HEK293 (cell line): ENCODE measurements at regions of chr19 and their contacts with region 1.

Region 1: GRCh38 chr19:58362272-58362994 is at the start of gene ZNF497:
- H3K4me3 ChIP-seq: peak within 1 kb of the TSS; percentile 96
- H3K27ac ChIP-seq: peak within 1 kb of the TSS; percentile 85
- H3K4me1 ChIP-seq: no peaks in the 10 kb centered on the region
- CTCF ChIP-seq: peak; percentile 78

Region 2: DNA sequence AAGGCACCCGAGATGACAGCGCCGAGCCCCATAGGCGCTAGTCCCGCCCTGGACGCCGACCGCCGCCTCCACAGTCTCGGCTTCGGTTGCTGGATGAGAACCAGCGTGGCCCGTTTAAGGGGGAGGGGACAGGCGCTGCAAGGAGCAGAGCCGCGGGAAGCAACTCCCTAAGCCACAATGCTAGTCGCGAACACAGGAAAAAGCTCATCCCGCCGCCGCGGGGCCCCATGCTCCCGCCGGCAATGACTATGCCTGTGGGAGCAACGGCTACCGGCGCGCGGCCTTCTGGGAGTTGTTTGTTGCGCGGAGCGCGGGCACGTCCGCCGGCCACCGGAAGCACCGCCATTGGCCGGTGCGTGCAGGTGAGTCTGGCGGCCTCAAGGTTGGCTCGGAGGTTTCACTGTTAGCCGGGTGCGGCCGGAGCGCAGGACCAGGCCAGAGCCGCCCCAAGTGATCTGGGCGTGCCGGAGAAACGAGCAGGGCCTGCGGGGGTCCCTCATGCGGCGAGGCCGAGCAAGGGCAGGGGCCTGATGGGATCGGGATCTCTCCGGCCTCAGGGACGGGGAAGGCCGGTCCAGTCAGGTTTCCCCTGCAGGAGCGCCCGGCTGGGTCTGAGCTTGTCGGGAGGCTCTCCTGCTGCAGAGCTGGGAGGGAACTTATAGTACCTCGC is 133.7 kb before region 1 on chr19 and contains the start of gene ZNF544:
- CTCF ChIA-PET with region 1: no interaction called
- POLR2A ChIA-PET with region 1: interaction called, 23 read pairs
- H3K4me3 ChIP-seq: peak within 1 kb of the TSS; percentile 93
- H3K27ac ChIP-seq: peak within 1 kb of the TSS; percentile 90
- H3K4me1 ChIP-seq: no peaks in the 10 kb centered on the region
- CTCF ChIP-seq: peak; percentile 21

Region 3: GRCh38 chr19:58261968-58262921 is 100.2 kb before region 1 on chr19:
- CTCF ChIA-PET with region 1: no interaction called
- POLR2A ChIA-PET with region 1: no interaction called
- H3K4me3 ChIP-seq: no peak overlapping the region
- H3K27ac ChIP-seq: no peak overlapping the region
- H3K4me1 ChIP-seq: no peaks in the 10 kb centered on the region
- CTCF ChIP-seq: no peak

Region 4: DNA sequence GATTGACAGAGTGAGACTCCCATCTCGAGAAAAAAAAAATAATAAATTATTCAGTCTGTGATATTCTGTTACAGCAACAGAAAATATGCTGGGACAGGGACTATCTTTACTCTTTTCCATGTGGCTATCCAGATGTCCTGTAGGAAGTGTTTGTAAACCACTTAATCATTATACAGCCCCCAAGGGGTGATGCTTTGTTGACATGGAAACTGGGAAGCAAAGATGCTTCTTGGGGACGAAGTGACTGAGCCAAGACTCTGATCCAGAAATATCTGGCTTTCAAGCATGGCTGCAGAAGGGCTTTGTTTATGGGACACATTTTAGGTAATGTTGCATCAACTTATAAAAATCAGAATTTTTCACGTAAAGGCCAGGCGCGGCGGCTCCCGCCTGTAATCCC is 78.2 kb before region 1 on chr19:
- CTCF ChIA-PET with region 1: no interaction called
- POLR2A ChIA-PET with region 1: no interaction called
- H3K4me3 ChIP-seq: no peak overlapping the region
- H3K27ac ChIP-seq: no peak overlapping the region
- H3K4me1 ChIP-seq: no peaks in the 10 kb centered on the region
- CTCF ChIP-seq: no peak

Region 5: DNA sequence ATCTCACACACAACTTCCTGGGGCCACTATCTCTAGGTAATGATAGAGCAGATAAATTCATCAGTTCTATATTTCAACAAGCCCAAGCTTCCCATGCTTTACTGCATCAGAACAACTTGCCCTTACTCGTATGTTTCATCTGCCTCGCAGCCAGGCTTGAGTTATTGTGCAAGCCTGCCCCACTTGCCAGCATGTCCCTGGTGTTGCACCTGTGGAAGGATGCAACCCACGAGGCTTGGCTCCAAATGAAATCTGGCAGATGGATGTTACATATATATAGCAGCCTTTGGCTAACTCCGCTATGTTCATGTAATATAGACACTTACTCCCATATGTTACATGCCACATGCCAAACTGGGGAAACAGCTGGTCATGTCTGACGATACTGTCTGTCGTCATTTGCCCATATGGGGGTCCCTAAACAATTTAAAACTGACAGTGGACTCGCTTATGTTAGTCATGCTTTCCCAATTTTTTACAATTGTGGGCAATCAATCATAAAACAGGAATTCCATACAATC is 51.0 kb before region 1 on chr19:
- CTCF ChIA-PET with region 1: no interaction called
- POLR2A ChIA-PET with region 1: no interaction called
- H3K4me3 ChIP-seq: no peak overlapping the region
- H3K27ac ChIP-seq: no peak overlapping the region
- H3K4me1 ChIP-seq: no peaks in the 10 kb centered on the region
- CTCF ChIP-seq: no peak

Region 6: DNA sequence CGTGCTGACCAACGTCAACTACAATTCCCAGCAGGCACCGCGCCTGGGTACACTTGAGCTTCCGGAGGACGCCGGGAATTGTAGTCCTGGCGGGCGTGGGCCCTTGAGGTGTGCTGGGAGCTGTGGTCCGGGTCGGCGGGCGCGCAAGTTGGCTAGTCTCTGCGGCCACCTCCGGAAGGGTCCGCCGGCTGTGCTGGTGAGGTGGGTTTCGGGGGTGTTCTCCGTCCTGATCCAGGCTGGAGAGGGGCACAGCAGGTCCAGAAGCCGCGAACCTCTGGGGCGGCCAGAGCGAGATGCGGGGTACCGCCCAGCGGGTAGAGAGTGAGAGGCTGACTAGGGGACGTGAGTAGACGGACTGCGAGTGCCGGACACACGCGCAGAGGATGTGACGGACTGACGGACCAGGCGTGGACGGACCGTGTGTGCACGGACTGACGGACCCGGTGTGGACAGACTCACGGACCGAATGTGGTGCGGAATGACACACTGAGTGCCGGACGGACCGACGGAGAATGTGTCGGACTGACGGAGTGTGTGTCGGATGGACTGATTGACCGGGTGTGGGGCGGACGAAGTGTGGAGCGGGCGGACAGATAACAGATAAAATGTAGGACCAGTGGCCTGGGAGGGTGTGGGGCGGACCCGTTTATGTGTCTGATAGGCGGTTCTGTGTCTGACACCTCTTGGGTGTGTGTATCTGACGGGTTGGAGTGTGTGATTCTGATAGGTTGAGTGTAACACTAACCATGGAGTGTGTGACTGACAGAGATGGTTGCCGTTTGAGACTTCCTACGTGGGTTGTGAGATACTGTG is 35.3 kb before region 1 on chr19 and contains the start of gene ZSCAN22:
- CTCF ChIA-PET with region 1: interaction called, 4 read pairs
- POLR2A ChIA-PET with region 1: interaction called, 38 read pairs
- H3K4me3 ChIP-seq: peak within 1 kb of the TSS; percentile 98
- H3K27ac ChIP-seq: peak within 1 kb of the TSS; percentile 67; the same call in 1 of the 2 replicates
- H3K4me1 ChIP-seq: peaks cover 3% of the 10 kb centered on the region; the same call in 1 of the 2 replicates
- CTCF ChIP-seq: peak; percentile 70

Region 7: GRCh38 chr19:58346961-58347931 is 15.2 kb before region 1 on chr19:
- CTCF ChIA-PET with region 1: interaction called, 9 read pairs
- POLR2A ChIA-PET with region 1: interaction called, 29 read pairs
- H3K4me3 ChIP-seq: peak overlapping the region; percentile 79
- H3K27ac ChIP-seq: peak overlapping the region; percentile 34; the same call in 1 of the 2 replicates
- H3K4me1 ChIP-seq: no peaks in the 10 kb centered on the region
- CTCF ChIP-seq: no peak

Region 8: DNA sequence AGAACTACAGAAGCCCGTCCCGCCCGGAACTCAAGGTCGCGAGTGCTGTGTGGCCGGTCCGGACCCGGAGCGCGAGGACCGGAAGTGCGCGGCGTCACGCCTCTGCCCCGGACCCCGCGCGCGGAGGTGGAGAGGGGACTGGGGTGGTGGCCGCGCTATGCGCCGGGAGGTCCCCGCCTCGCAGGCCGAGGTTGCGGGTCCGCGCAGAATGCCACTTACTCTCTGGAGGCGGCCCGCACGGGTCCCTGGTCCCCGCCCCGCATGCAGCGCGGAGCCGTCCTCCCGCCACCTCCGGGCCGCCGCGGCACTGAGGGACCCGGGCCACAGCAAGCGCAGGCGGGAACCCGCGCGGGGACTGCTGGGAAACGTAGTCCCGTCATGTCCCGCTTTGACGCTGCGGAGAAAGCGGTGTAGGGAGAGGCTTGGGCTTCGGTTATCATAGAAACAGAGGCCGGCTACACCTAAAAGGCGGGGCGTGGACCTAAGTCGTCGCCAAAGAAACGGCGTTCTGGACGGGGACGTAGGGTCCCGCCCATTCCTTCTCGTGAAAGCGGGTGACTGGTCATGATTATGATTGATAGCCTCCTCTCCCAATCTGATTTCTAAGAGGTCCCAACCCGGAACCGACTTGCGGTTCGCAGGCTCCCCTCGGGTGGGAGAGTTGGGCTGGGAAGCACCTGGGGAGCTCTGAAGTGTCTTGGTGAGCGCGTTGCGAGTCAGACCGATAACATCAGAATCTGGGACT is 18.5 kb after region 1 on chr19 and contains the start of gene ZNF837:
- CTCF ChIA-PET with region 1: interaction called, 5 read pairs
- POLR2A ChIA-PET with region 1: interaction called, 28 read pairs
- H3K4me3 ChIP-seq: peak within 1 kb of the TSS; percentile 83
- H3K27ac ChIP-seq: peak within 1 kb of the TSS; percentile 87
- H3K4me1 ChIP-seq: peaks cover 11% of the 10 kb centered on the region
- CTCF ChIP-seq: no peak

Region 9: DNA sequence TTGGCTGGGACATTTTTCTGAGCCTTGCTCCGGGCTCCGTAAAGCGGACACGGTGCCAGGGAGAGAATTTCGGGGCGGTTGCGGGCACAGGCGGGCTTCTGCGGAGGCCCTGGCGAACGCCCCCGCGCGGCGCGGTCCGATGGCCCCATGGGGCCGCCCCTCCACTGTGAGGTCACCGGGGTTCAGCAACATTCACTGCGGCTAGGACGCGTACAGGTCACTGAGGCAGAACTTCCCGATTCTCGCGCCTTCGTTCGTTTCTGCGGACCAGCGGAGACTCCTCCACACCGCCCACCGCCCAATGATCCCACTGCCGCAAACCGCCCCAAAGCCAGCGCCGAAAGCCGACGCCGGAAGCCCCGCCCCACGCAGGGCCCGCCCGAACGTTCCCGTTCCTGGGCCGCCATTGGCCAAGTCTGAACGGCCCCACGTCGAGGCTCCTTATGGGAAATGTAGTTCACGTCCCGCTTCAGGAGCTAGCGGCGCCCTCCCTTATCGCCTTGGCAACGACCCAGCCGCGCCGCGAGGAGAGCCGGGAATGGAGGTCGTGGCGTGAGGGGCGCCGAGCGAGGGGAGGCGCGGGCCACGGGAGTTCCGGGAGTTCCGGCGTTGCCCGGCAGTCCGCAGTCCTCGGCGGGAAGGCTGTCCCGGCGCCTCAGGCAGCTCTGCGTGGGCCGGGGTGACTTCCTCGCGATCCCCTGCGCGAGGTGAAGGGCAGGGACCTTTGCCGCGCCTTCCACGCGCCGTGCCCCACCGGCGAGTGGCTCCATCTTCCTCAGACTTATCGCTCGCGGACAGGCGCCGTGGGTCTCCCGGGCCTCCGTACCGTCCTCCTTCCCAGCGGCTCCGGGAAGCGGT is 45.9 kb after region 1 on chr19 and contains the start of gene ZNF584:
- CTCF ChIA-PET with region 1: interaction called, 5 read pairs
- POLR2A ChIA-PET with region 1: interaction called, 24 read pairs
- H3K4me3 ChIP-seq: peak within 1 kb of the TSS; percentile 98
- H3K27ac ChIP-seq: peak within 1 kb of the TSS; percentile 76
- H3K4me1 ChIP-seq: peaks cover 4% of the 10 kb centered on the region; the same call in 1 of the 2 replicates
- CTCF ChIP-seq: peak; percentile 76

Region 10: DNA sequence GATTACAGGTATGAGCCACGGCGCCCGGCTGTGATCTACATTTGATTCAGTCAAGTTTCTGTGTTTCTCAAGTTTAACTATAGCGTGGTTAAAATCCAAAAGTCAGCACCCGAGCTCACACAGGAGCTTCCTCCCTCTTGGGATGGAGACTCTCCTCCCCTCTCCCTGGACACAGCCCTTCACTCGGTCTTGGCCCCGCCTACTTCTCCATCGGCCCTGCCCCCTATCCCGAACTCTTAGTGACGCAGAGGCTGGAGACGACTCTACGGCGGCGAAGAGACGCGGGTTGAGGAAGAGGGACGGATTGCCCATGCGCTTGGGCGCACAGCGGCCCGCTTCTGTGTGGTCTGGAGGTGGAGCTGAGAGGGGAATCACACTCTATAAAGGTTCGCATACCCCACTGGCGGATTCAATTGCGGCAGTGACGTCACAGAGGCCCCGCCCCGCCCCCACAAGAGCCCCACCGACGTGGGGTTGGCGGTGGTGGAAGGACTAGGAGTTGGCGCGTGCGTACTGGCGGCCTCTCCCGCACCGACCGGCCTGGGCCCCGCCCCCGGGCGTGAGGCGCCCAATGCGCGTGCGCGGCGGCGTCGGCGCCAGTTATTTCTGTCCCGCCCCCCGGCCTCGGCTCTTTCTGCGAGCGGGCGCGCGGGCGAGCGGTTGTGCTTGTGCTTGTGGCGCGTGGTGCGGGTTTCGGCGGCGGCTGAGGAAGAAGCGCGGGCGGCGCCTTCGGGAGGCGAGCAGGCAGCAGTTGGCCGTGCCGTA is 181.6 kb after region 1 on chr19 and contains the start of gene TRIM28:
- CTCF ChIA-PET with region 1: no interaction called
- POLR2A ChIA-PET with region 1: interaction called, 18 read pairs
- H3K4me3 ChIP-seq: peak within 1 kb of the TSS; percentile 67
- H3K27ac ChIP-seq: peak within 1 kb of the TSS; percentile 99
- H3K4me1 ChIP-seq: peaks cover 13% of the 10 kb centered on the region
- CTCF ChIP-seq: no peak; the same call in 1 of the 2 replicates